A549 (cell line): ENCODE measurements at regions of chr18 and their contacts with region 1.

Region 1: GRCh38 chr18:59996370-59996966 is 96.7 kb downstream of the PMAIP1 start:
- DNase-seq: peak; percentile 33 to 58
- ATAC-seq: peak; percentile 77 to 82; a peak in 5 of 6 replicates
- H3K4me3 ChIP-seq: no peak overlapping the region
- H3K27ac ChIP-seq: no peak overlapping the region
- H3K4me1 ChIP-seq: no peaks in the 10 kb centered on the region
- CTCF ChIP-seq: peak; percentile 73
- EP300 ChIP-seq: no peak
- POLR2A ChIP-seq: no peak
- RAD21 ChIP-seq: peak; percentile 84 to 89

Region 2: GRCh38 chr18:59980188-59980637 is 16.3 kb before region 1 on chr18:
- CTCF ChIA-PET with region 1: interaction called, 10 read pairs
- POLR2A ChIA-PET with region 1: no interaction called
- DNase-seq: no peak
- ATAC-seq: no peak
- H3K4me3 ChIP-seq: no peak overlapping the region
- H3K27ac ChIP-seq: no peak overlapping the region
- H3K4me1 ChIP-seq: no peaks in the 10 kb centered on the region
- CTCF ChIP-seq: no peak
- EP300 ChIP-seq: no peak
- POLR2A ChIP-seq: no peak
- RAD21 ChIP-seq: no peak

Region 3: GRCh38 chr18:60292186-60292585 is 295.7 kb after region 1 on chr18:
- CTCF ChIA-PET with region 1: no interaction called
- POLR2A ChIA-PET with region 1: no interaction called
- DNase-seq: no peak
- ATAC-seq: no peak
- H3K4me3 ChIP-seq: no peak overlapping the region
- H3K27ac ChIP-seq: no peak overlapping the region
- H3K4me1 ChIP-seq: no peaks in the 10 kb centered on the region
- CTCF ChIP-seq: no peak
- EP300 ChIP-seq: no peak
- POLR2A ChIP-seq: no peak
- RAD21 ChIP-seq: no peak

Region 4: DNA sequence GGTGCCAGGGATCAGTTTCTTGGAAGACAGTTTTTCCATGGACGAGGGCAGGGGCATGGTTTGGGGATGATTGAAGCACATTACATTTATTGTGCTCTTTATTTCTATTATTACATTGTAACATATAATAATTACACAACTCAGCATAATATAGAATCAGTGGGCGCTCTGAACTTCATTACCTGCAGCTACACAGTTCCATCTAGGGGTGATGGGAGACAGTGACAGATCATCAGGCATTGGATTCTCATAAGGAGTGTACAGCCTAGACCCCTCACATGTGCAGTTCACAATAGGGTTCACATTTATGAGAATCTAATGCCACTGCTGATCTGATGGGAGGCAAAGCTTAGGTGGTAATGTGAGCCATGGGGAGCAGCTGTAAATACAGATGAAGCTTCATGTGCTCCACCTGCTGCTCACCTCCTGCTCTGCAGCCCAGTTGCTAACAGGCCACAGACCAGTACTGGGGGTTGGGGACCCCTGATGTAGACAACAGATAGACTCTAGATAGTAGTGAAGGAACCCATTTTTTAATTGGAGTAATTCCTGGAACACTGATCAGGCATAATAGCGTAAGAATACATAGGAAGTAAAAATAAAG is 417.6 kb after region 1 on chr18:
- CTCF ChIA-PET with region 1: interaction called, 30 read pairs
- POLR2A ChIA-PET with region 1: no interaction called
- DNase-seq: peak in 1 of 2 experiments; percentile 11
- ATAC-seq: peak in 1 of 2 experiments; percentile 55; a peak in 2 of 6 replicates
- H3K4me3 ChIP-seq: no peak overlapping the region
- H3K27ac ChIP-seq: no peak overlapping the region
- H3K4me1 ChIP-seq: no peaks in the 10 kb centered on the region
- CTCF ChIP-seq: peak; percentile 43; the same call in 2 of the 3 replicates
- EP300 ChIP-seq: no peak
- POLR2A ChIP-seq: no peak
- RAD21 ChIP-seq: peak; percentile 37 to 46; a peak in 3 of 5 replicates

Region 5: GRCh38 chr18:60549338-60549960 is 553.0 kb after region 1 on chr18:
- CTCF ChIA-PET with region 1: interaction called, 70 read pairs
- POLR2A ChIA-PET with region 1: interaction called, 6 read pairs
- DNase-seq: peak; percentile 1 to 58
- ATAC-seq: no peak
- H3K4me3 ChIP-seq: peak overlapping the region; percentile 26; the same call in 1 of the 3 replicates
- H3K27ac ChIP-seq: peak overlapping the region in 1 of 2 experiments; percentile 59; a peak in 2 of 6 replicates
- H3K4me1 ChIP-seq: no peaks in the 10 kb centered on the region
- CTCF ChIP-seq: peak; percentile 76
- EP300 ChIP-seq: no peak
- POLR2A ChIP-seq: no peak
- RAD21 ChIP-seq: peak; percentile 82

Region 6: GRCh38 chr18:60554967-60555366 is 558.5 kb after region 1 on chr18:
- CTCF ChIA-PET with region 1: interaction called, 70 read pairs
- POLR2A ChIA-PET with region 1: no interaction called
- DNase-seq: no peak
- ATAC-seq: no peak
- H3K4me3 ChIP-seq: no peak overlapping the region
- H3K27ac ChIP-seq: no peak overlapping the region
- H3K4me1 ChIP-seq: no peaks in the 10 kb centered on the region
- CTCF ChIP-seq: no peak
- EP300 ChIP-seq: no peak
- POLR2A ChIP-seq: no peak
- RAD21 ChIP-seq: no peak